A673 (cell line): ENCODE measurements at regions of chr17 and their contacts with region 1.

Region 1: DNA sequence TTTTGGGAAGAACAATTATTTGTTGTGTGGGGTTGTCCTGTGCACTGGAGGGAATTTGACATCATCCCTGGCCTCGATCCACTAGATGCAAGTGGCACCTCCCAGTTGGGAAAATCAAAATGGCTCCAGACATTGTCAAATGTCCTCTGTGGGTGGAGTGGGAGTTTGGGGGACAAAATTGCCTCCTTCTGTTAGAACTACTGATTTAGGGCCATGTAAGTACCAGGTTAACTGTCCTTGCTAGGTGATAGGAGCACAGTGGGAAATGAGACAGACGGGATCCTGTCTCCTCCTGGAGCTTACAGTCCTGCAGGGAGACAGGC is 56.8 kb downstream of the ARHGAP23 start:
- DNase-seq: no peak
- H3K4me3 ChIP-seq: no peak overlapping the region
- H3K27ac ChIP-seq: no peak overlapping the region
- H3K4me1 ChIP-seq: no peaks in the 10 kb centered on the region
- H3K27me3 ChIP-seq: no peaks in the 10 kb centered on the region
- CTCF ChIP-seq: no peak

Region 2: DNA sequence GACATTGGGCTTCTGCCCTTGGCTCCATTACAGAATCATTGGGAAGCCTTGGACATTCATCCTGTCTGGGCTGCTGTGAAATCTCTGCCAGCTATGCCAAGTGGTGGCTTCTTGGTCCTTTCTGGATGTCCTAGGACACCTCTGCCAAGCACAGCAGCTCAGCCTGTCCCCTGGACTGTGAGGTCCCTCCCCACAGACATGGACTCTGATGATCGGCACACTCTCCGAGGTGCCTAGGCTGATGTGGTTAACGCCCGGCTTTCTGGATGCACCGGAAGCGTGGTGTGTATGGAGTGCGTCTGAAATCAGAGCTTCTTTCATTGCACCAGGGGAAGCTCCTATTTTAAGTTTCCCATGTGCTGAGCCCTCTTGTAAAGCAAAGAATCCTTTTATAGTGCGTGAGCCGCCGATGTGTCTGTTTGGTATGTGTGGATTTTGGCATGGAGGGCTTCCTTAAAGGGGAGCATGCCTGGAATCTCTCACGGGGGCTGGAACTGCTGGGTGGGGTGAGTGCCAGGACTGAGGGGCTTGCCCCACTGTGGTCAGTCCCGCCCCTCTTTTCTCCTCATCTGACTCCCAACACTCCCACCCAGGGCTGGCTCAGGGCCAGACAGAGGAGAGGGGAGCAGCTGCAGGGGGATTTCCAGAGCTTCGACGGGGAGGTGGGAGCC is 63.8 kb before region 1 on chr17:
- CTCF ChIA-PET with region 1: no interaction called
- POLR2A ChIA-PET with region 1: no interaction called
- intact Hi-C with region 1: loop called (anchors 5 kb)
- DNase-seq: no peak
- H3K4me3 ChIP-seq: no peak overlapping the region
- H3K27ac ChIP-seq: no peak overlapping the region
- H3K4me1 ChIP-seq: peaks cover 8% of the 10 kb centered on the region
- H3K27me3 ChIP-seq: no peaks in the 10 kb centered on the region
- CTCF ChIP-seq: no peak

Region 3: GRCh38 chr17:38449364-38449763 is 35.7 kb before region 1 on chr17:
- CTCF ChIA-PET with region 1: no interaction called
- POLR2A ChIA-PET with region 1: no interaction called
- intact Hi-C with region 1: loop called (anchors 5 kb)
- DNase-seq: no peak
- H3K4me3 ChIP-seq: no peak overlapping the region
- H3K27ac ChIP-seq: no peak overlapping the region
- H3K4me1 ChIP-seq: peaks cover 24% of the 10 kb centered on the region
- H3K27me3 ChIP-seq: no peaks in the 10 kb centered on the region
- CTCF ChIP-seq: no peak